Ascending aorta (tissue), 2 donors: ENCODE measurements at regions of chr17 and their contacts with region 1.

Region 1: GRCh38 chr17:59331129-59331928 is at the start of gene YPEL2:
- DNase-seq: peak; percentile 87 to 97
- H3K4me3 ChIP-seq: peak within 1 kb of the TSS; percentile 85 to 99
- H3K27ac ChIP-seq: peak within 1 kb of the TSS; percentile 97 to 99
- H3K4me1 ChIP-seq: peaks cover 14 to 51% of the 10 kb centered on the region in 2 donors
- H3K27me3 ChIP-seq: no peaks in the 10 kb centered on the region
- CTCF ChIP-seq: no peak
- total RNA-seq, gene YPEL2: 10.5 TPM

Region 2: DNA sequence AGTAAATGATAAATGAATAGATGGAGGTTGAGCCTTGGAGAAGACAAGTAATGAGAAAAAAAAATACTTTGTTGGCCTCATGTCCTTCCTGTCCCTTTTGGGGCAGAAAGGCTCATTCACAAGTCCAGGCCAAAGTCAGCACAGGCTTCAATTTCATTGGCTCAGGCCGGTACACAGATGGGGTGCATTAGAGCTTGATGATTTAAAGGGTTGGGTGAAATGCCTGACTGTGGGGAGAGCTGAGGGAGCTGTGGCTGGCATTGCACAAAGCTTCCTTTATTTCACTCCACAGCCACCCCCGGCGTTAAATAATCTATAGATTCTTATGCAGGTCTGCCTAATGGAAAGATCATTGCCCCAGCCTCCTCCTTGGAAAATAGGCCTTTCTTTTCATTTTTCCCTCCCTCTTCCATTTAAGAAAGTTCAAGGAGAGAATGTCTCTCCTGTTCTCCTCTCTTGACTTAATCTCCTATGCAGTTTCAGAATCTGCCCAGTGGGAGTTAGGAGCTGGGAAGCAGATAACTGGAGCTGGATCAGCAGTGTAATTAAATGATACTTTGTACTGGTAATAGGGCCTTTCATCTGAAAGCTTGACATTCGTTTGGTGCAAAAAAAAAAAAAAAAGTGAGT is 24.5 kb after region 1 on chr17:
- intact Hi-C with region 1: loop called (anchors 2 kb)
- DNase-seq: no peak
- H3K4me3 ChIP-seq: no peak overlapping the region
- H3K27ac ChIP-seq: peak overlapping the region; percentile 94 to 95
- H3K4me1 ChIP-seq: peaks cover 28 to 90% of the 10 kb centered on the region in 2 donors
- H3K27me3 ChIP-seq: no peaks in the 10 kb centered on the region
- CTCF ChIP-seq: no peak

Region 3: GRCh38 chr17:59366773-59367657 is 35.7 kb after region 1 on chr17:
- intact Hi-C with region 1: loop called (anchors 2 kb)
- DNase-seq: peak in 1 of 2 donors; percentile 81
- H3K4me3 ChIP-seq: peak overlapping the region in 1 of 2 donors; percentile 1
- H3K27ac ChIP-seq: peak overlapping the region; percentile 94 to 95
- H3K4me1 ChIP-seq: peaks cover 65 to 94% of the 10 kb centered on the region in 2 donors
- H3K27me3 ChIP-seq: no peaks in the 10 kb centered on the region
- CTCF ChIP-seq: no peak

Region 4: DNA sequence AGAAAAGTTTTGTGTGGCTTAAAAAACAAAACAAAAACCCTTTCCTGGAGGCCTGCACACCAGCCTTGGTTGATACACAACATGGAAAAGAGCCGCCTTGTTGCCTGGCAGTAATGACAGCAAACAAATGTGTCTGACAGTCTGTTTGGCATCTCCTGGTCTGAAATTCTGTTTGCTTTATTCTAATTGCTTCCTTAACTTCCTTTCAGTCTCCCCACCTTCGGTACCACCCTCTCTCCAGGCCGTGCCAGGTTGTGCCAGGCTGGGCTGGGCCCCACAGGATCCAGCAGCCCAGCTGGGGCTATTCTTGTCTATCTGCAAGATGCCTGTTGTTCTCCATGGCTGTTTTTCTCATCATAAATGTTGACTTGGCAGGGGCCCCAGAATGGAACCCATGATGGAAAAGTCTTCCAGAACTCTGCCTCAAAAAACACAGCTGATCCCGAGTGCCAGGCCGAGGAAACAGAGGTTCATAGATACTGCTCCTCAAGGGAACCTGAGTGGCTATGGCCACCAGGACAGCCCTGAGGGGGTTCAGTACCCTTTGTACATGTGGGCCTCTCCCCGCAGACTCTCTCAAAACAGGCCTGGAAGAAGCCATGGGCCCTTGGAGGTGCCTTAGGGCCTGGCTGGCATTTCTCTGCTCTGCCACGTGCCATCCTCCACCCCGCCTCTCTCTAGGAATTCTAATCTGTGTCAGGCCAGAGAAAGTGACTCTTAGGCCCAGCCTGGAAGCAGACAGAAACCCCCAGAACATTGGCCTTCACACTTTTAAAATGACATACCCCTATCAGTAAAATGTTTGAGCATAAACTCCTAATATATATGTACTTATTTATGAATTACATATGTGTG is 50.6 kb after region 1 on chr17:
- intact Hi-C with region 1: loop called (anchors 2 kb)
- DNase-seq: peak in 1 of 2 donors; percentile 88
- H3K4me3 ChIP-seq: peak overlapping the region in 1 of 2 donors; percentile 14
- H3K27ac ChIP-seq: peak overlapping the region; percentile 94 to 95
- H3K4me1 ChIP-seq: peaks cover 32 to 64% of the 10 kb centered on the region in 2 donors
- H3K27me3 ChIP-seq: no peaks in the 10 kb centered on the region
- CTCF ChIP-seq: no peak

Region 5: DNA sequence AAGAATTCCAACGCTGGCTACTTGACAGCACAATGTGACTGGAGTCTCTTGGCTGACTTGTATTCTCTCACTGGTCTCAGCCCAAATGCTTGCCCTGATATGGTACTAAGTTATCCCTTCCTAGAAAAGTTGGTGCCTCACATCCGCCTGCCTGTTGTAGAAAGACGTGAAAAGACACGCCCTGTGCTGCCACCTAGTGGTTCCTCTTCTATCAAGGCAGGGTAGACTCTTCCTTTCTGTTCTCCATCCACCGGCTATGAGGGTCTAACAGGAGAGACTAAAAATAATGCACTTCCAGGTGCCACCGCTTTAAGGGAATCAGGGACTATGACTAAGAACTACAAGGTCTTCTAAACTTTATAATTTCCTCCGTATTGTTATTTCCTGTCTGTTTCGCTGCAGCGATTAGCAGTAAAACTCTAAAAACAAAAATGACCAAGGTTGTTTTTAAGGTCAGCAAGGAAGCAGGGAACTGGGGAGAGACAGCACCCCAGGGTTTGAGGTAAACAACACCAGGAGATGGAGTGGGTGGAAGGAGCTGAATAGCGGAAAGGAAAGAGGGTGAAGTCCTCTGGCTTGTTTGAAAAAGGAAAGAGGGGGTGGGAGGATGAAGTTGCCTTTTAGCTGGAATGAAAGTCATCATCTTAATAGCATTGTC is 109.6 kb after region 1 on chr17:
- intact Hi-C with region 1: loop called (anchors 1 kb)
- DNase-seq: peak; percentile 68 to 98
- H3K4me3 ChIP-seq: peak overlapping the region in 1 of 2 donors; percentile 22
- H3K27ac ChIP-seq: peak overlapping the region; percentile 91 to 93
- H3K4me1 ChIP-seq: peaks cover 8 to 35% of the 10 kb centered on the region in 2 donors
- H3K27me3 ChIP-seq: no peaks in the 10 kb centered on the region
- CTCF ChIP-seq: peak; percentile 71 to 93 (median 74)

Region 6: GRCh38 chr17:59483860-59484259 is 152.5 kb after region 1 on chr17:
- intact Hi-C with region 1: loop called (anchors 5 kb)
- DNase-seq: no peak
- H3K4me3 ChIP-seq: no peak overlapping the region
- H3K27ac ChIP-seq: peak overlapping the region; percentile 81 to 84
- H3K4me1 ChIP-seq: peaks cover 0 to 11% of the 10 kb centered on the region in 2 donors
- H3K27me3 ChIP-seq: no peaks in the 10 kb centered on the region
- CTCF ChIP-seq: no peak

Region 7: DNA sequence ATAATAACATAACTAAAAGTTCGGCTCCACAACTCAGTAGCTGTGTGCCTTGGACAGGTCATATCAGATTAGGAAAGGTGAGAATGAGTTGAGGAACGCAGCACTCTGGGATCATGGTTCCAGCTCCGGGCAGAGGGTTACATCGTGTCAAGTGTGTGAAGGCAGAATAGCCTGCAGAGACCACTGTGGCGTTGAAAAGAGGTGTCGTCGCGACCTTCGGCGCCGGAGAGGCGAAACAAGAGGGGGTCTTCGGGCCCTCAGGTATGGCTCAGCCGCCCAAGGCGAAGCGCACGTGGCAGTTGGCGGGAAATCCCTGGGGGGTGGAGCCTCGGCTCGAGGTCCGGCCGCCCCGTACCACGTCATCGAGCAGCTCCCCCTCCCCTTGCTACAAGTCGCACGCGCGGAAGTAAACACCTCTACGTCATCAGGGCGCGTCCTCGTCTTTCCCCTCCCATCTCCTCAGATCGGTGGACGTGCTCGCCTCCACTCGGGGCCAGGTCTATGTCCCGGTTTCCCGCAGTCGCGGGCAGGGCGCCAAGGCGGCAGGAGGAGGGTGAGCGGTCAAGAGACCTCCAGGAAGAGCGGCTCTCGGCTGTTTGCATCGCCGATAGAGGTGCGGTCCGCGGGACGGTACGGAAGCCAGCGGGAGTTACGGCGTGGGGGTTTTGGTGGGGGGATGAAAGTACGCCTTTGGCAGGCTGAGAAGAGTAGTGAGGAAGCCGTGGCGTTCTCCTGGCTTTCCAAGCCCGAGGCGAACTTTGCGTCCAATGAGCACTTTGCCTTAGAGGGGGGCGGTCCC is 234.0 kb after region 1 on chr17 and contains the start of gene DHX40:
- intact Hi-C with region 1: loop called (anchors 5 kb)
- DNase-seq: peak; percentile 78 to 98
- H3K4me3 ChIP-seq: peak within 1 kb of the TSS; percentile 57 to 100
- H3K27ac ChIP-seq: peak within 1 kb of the TSS; percentile 81 to 97
- H3K4me1 ChIP-seq: peaks cover 0 to 8% of the 10 kb centered on the region in 2 donors
- H3K27me3 ChIP-seq: no peaks in the 10 kb centered on the region
- CTCF ChIP-seq: no peak
- total RNA-seq, gene DHX40: 4.8 TPM